Caco-2 (cell line): ENCODE measurements at regions of chr6 and their contacts with region 1.

Region 1: DNA sequence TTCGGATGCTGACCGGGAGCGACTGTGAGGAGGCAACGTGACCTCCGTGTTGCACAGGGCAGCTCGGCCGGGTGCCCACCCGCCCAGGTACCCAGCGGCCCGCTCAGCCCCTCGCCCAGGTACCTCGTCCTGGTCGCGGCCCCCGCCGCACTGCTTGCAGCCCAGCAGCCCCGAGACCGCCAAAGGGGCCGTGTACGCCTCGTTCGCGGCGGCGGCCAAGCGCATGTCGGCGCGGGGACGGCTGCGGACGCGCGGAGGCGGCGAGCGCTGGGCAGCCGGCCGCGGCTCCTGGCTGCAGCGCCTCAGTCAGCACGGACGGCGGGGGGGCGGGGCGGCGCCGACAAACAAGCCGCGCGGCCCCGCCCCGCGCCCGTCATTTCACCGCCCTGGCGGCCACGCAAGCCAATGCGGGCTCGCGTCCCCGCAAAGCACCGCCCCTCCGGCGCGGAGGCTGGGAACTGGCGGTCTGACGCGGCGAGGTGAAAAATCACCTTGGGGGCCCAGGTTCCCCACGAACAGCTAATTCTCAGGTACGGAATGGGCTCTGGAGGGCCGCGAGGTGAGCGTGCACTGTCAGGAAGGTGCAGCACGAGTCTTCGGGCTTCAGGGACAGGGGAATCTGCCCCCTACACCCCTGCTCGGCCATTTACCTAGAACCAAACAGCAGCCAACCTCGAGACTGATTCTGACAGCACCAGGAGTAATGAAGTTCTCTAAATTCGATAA is 85.2 kb downstream of the SESN1 start:
- DNase-seq: peak; percentile 88 to 95
- H3K4me3 ChIP-seq: peak overlapping the region; percentile 82
- H3K4me3 Mint-ChIP-seq: peak overlapping the region; percentile 76
- H3K27ac Mint-ChIP-seq: peak overlapping the region; percentile 74
- H3K4me1 ChIP-seq: peaks cover 28% of the 10 kb centered on the region
- H3K4me1 Mint-ChIP-seq: peaks cover 18% of the 10 kb centered on the region
- H3K27me3 ChIP-seq: no peaks in the 10 kb centered on the region
- H3K27me3 Mint-ChIP-seq: no peaks in the 10 kb centered on the region
- CTCF ChIP-seq: no peak

Region 2: GRCh38 chr6:108966855-108967755 is 42.3 kb before region 1 on chr6:
- CTCF ChIA-PET with region 1: no interaction called
- POLR2A ChIA-PET with region 1: interaction called, 4 read pairs
- intact Hi-C with region 1: loop called (anchors 1 kb)
- DNase-seq: peak in 1 of 2 experiments; percentile 13
- H3K4me3 ChIP-seq: no peak overlapping the region
- H3K4me3 Mint-ChIP-seq: no peak overlapping the region
- H3K27ac Mint-ChIP-seq: peak overlapping the region; percentile 24
- H3K4me1 ChIP-seq: peaks cover 21% of the 10 kb centered on the region
- H3K4me1 Mint-ChIP-seq: peaks cover 7% of the 10 kb centered on the region
- H3K27me3 ChIP-seq: no peaks in the 10 kb centered on the region
- H3K27me3 Mint-ChIP-seq: no peaks in the 10 kb centered on the region
- CTCF ChIP-seq: no peak

Region 3: GRCh38 chr6:109039795-109040194 is 30.4 kb after region 1 on chr6:
- CTCF ChIA-PET with region 1: interaction called, 3 read pairs
- POLR2A ChIA-PET with region 1: interaction called, 3 read pairs
- intact Hi-C with region 1: loop called (anchors 5 kb)
- DNase-seq: peak; percentile 45 to 53
- H3K4me3 ChIP-seq: no peak overlapping the region
- H3K4me3 Mint-ChIP-seq: peak overlapping the region; percentile 34
- H3K27ac Mint-ChIP-seq: peak overlapping the region; percentile 41
- H3K4me1 ChIP-seq: peaks cover 41% of the 10 kb centered on the region
- H3K4me1 Mint-ChIP-seq: peaks cover 24% of the 10 kb centered on the region
- H3K27me3 ChIP-seq: no peaks in the 10 kb centered on the region
- H3K27me3 Mint-ChIP-seq: no peaks in the 10 kb centered on the region
- CTCF ChIP-seq: no peak